B cell (primary cell): ENCODE measurements at regions of chr3 and their contacts with region 1.

Region 1: DNA sequence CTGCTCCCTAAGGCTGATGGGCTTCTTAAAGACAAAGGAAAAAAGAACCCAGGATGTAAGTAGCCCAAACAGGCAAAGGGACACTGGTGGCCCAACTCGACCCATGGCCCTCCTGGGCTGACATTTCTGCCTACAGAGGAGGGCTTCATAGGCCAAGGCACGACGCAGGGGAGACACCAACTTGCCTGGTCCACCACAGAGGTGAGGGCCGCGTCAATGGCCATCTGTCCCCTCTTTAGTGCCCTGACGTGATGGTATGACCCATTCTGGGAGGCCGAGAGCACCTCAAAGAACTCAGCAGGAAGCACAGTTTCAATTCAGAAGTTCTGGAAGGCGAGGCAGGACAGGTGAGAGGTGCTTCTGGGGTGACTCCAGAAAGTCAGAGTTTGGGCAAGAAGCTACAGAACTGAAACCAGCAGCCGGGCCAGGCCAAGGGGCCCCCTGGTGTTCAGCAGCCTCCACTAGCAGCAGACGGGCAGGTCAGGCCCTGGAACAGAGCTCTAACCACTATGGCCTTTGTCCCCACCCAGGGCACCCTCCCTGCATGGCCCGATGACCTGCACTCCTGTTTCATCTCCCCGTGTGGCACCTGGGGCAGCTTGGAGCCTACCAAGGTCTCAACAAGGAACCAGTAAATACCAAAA is 45.1 kb downstream of the HMCES start:
- DNase-seq: peak; percentile 69
- ATAC-seq: peak; percentile 82
- H3K4me3 ChIP-seq: no peak overlapping the region
- H3K4me3 Mint-ChIP-seq: no peak overlapping the region
- H3K27ac ChIP-seq: no peak overlapping the region
- H3K27ac Mint-ChIP-seq: no peak overlapping the region
- H3K4me1 ChIP-seq: peaks cover 2 to 5% of the 10 kb centered on the region in 2 donors
- H3K4me1 Mint-ChIP-seq: peaks cover 3% of the 10 kb centered on the region
- H3K27me3 ChIP-seq: peaks cover 0 to 12% (median 6%) of the 10 kb centered on the region in 4 experiments
- H3K27me3 Mint-ChIP-seq: peaks cover 5% of the 10 kb centered on the region
- CTCF ChIP-seq: peak; percentile 50

Region 2: DNA sequence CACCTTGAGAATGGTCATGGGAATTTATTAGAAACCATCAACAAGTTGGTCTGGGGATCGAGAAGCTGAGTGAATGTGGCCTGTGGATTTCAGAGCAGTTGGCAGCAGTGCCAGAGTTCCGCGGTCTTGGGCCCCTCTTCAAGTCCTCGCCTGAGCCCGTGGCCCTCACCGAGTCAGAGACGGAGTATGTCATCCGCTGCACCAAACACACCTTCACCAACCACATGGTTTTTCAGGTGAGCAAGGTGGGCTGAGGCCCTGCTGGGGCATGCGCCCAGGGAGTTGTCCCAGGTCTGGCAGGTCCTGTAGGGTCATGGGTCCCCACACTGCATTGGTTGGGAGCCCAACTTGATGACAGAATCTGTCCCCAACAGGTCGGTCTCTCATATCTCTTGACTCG is 52.1 kb before region 1 on chr3:
- CTCF ChIA-PET with region 1: interaction called, 58 read pairs
- POLR2A ChIA-PET with region 1: no interaction called
- intact Hi-C with region 1: no loop called
- DNase-seq: no peak
- ATAC-seq: no peak
- H3K4me3 ChIP-seq: no peak overlapping the region
- H3K4me3 Mint-ChIP-seq: no peak overlapping the region
- H3K27ac ChIP-seq: no peak overlapping the region
- H3K27ac Mint-ChIP-seq: no peak overlapping the region
- H3K4me1 ChIP-seq: peaks cover 15% of the 10 kb centered on the region in 2 donors
- H3K4me1 Mint-ChIP-seq: peaks cover 21% of the 10 kb centered on the region
- H3K27me3 ChIP-seq: no peaks in the 10 kb centered on the region
- H3K27me3 Mint-ChIP-seq: no peaks in the 10 kb centered on the region
- CTCF ChIP-seq: no peak

Region 3: DNA sequence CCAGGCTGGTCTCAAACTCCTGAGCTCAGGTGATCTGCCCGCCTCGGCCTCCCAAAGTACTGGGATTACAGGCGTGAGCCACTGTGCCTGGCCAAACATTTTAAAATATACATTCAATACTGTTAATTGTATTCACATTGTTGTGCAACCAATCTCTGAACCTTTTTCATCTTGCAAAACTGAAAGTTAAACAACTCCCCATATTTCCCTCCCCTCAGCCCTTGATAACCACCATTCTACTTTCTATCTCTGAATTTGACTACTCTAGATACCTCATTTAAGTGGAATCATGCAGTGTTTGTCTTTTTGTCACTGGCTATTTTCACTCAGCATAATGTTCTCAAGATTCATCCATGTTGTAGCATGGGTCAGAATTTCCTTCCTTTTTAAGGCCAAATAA is 15.1 kb before region 1 on chr3:
- CTCF ChIA-PET with region 1: no interaction called
- POLR2A ChIA-PET with region 1: no interaction called
- intact Hi-C with region 1: no loop called
- DNase-seq: no peak
- ATAC-seq: no peak
- H3K4me3 ChIP-seq: no peak overlapping the region
- H3K4me3 Mint-ChIP-seq: no peak overlapping the region
- H3K27ac ChIP-seq: no peak overlapping the region
- H3K27ac Mint-ChIP-seq: no peak overlapping the region
- H3K4me1 ChIP-seq: peaks cover 16 to 27% of the 10 kb centered on the region in 2 donors
- H3K4me1 Mint-ChIP-seq: peaks cover 30% of the 10 kb centered on the region
- H3K27me3 ChIP-seq: no peaks in the 10 kb centered on the region
- H3K27me3 Mint-ChIP-seq: no peaks in the 10 kb centered on the region
- CTCF ChIP-seq: no peak

Region 4: DNA sequence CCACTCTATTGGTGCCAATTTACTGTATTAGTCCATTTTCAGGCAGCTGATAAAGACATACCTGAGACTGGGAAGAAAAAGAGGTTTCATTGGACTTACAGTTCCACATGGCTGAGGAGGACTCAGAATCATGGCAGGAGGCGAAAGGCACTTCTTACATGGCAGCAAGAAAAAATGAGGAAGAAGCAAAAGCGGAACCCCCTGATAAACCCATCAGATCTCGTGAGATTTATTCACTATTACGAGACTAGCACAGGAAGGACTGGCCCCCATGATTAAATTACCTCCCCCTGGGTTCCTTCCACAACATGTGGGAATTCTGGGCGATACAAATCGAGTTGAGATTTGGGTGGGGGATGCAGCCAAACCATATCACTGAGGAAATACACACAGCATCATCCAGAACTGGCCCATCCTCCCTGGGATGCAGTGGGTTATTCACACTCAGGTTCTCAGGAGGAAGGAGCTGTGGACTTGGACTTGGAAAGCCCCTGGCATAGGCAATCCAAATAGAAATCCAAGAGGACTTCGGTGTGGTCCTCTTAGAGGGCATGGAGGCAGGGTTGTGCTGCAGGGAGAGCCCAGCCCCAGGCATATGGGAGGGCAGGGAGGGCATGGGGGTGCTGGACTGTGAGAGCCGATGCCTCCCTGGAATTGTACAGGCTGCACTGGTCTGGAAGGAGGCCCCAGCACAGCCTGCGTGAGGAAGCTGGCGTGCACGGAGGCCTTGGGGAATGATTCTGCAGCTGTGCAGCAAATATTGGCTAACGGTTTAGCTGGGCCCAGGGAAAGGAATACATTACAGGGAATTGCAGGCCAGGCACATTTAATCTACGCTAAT is 41.7 kb after region 1 on chr3:
- CTCF ChIA-PET with region 1: no interaction called
- POLR2A ChIA-PET with region 1: no interaction called
- intact Hi-C with region 1: no loop called
- DNase-seq: no peak
- ATAC-seq: no peak
- H3K4me3 ChIP-seq: no peak overlapping the region
- H3K4me3 Mint-ChIP-seq: no peak overlapping the region
- H3K27ac ChIP-seq: no peak overlapping the region
- H3K27ac Mint-ChIP-seq: no peak overlapping the region
- H3K4me1 ChIP-seq: no peaks in the 10 kb centered on the region
- H3K4me1 Mint-ChIP-seq: peaks cover 2% of the 10 kb centered on the region
- H3K27me3 ChIP-seq: no peaks in the 10 kb centered on the region
- H3K27me3 Mint-ChIP-seq: peaks cover 3% of the 10 kb centered on the region
- CTCF ChIP-seq: no peak